ENCODE measurements at regions of chr19 and their contacts with region 1.

Region 1: GRCh38 chr19:1315470-1316231 is 30.0 kb downstream of the EFNA2 start:
- DNase-seq: peak; percentile 66
- ATAC-seq: peak; percentile 66
- H3K4me3 Mint-ChIP-seq: peak overlapping the region; percentile 20; the same call in 1 of the 2 replicates
- H3K27ac Mint-ChIP-seq: no peak overlapping the region
- H3K4me1 Mint-ChIP-seq: no peaks in the 10 kb centered on the region
- H3K27me3 Mint-ChIP-seq: peaks cover 22% of the 10 kb centered on the region
- CTCF ChIP-seq: peak; percentile 32; the same call in 1 of the 2 replicates

Region 2: GRCh38 chr19:1154731-1155351 is 160.8 kb before region 1 on chr19:
- CTCF ChIA-PET with region 1: no interaction called
- POLR2A ChIA-PET with region 1: no interaction called
- DNase-seq: no peak
- ATAC-seq: no peak
- H3K4me3 Mint-ChIP-seq: no peak overlapping the region
- H3K27ac Mint-ChIP-seq: no peak overlapping the region
- H3K4me1 Mint-ChIP-seq: no peaks in the 10 kb centered on the region
- H3K27me3 Mint-ChIP-seq: no peaks in the 10 kb centered on the region
- CTCF ChIP-seq: no peak

Region 3: DNA sequence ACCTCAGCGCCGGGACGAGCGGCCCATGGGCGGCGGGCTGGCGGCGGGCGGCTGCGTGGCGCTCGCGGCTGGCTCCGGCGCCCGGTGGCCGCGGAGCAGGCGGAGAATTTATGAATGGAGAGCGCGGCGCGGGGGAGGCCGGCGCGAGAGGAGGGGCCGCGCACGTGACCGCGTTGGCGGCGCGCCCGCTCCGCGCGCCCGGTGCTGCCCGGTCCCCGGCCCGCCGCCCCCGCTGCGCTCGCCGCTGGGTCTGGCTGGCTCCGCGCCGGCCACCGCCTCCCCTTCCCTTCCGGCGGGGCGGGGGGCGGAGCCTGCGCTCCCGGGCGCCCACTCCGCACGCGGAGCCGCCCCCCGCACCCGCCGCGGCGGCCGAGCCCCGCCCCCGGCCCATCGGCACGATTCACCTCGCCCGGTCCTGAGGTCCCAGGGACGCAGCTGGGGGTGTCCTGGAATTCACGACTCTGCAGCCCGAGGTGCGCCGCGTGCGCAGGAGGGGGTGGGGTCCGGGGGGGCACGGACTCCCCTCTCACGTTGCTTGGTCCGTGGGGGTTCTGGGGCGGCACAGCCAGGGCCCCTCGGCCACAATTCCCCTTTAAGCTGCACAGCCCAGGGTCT is 77.8 kb before region 1 on chr19 and contains the start of gene CBARP:
- CTCF ChIA-PET with region 1: no interaction called
- POLR2A ChIA-PET with region 1: no interaction called
- DNase-seq: peak; percentile 54
- ATAC-seq: peak; percentile 6
- H3K4me3 Mint-ChIP-seq: peak within 1 kb of the TSS; percentile 76
- H3K27ac Mint-ChIP-seq: peak within 1 kb of the TSS; percentile 87
- H3K4me1 Mint-ChIP-seq: peaks cover 17% of the 10 kb centered on the region
- H3K27me3 Mint-ChIP-seq: peaks cover 4% of the 10 kb centered on the region; the same call in 1 of the 2 replicates
- CTCF ChIP-seq: no peak
- total RNA-seq, gene CBARP: 21.9 to 23.6 TPM (median 23.4 TPM) in 3 replicates

Region 4: DNA sequence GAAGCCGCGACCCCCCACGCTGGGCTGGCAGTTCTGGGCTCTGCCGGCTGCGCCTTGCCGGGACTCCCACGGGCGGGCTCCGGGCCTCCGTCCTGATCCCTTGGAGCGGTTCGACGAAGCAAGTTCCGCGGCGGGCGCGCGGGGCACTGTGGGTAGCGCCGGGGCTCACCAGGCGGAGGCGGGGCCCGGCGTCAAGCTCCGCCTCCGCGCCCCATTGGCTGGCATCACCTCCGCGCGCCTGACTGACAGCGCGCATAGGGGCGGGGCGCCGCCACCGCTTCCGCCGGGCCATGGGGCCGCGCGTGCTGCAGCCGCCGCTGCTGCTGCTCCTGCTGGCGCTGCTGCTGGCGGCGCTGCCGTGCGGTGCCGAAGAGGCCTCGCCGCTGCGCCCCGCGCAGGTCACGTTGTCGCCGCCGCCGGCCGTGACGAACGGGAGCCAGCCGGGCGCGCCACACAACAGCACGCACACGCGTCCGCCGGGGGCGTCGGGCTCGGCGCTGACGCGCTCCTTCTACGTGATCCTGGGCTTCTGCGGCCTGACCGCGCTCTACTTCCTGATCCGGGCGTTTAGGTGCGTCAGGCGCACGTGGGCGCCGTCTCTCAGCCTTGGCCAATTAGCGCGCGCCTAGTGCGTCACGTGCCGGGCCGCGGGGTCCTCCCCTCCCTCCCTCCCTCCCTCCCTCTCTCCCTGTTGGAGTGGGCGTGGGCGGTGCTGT is 40.2 kb before region 1 on chr19 and contains the start of gene FAM174C:
- CTCF ChIA-PET with region 1: interaction called, 10 read pairs
- POLR2A ChIA-PET with region 1: no interaction called
- DNase-seq: peak; percentile 95
- ATAC-seq: peak; percentile 68
- H3K4me3 Mint-ChIP-seq: peak within 1 kb of the TSS; percentile 71
- H3K27ac Mint-ChIP-seq: peak within 1 kb of the TSS; percentile 95
- H3K4me1 Mint-ChIP-seq: peaks cover 34% of the 10 kb centered on the region
- H3K27me3 Mint-ChIP-seq: no peaks in the 10 kb centered on the region
- CTCF ChIP-seq: no peak
- total RNA-seq, gene FAM174C: 59.4 to 65.9 TPM (median 65.7 TPM) in 3 replicates

Region 5: DNA sequence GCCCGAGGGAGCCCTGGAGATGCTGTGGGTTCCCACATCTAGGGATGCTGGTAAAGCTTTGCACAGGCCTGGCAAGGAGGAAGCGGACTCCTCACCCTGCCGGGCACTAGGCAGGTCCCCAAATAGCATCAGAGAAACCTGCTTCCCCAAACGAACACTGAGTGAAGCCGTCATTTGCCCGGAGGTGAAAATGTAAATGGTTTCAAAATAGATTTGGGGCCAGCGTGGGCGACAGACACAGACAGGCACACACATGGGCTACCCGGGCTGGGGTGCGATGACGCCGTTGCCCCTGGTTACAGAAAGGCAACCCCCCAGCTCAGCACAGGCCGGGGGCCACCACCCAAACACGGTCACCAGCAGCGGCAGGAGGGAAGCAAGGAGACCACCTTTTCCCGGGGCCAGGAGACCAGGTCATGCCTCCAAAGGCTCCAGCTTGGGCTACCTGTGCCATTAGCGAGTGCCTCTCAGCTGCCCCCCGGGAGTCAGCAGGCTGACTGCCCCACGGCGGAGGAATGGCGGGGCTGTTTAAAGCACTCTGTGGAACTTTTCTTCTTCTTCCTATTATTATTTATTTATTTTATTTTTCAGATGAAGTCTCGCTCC is 20.5 kb after region 1 on chr19:
- CTCF ChIA-PET with region 1: interaction called, 12 read pairs
- POLR2A ChIA-PET with region 1: no interaction called
- DNase-seq: no peak
- ATAC-seq: no peak
- H3K4me3 Mint-ChIP-seq: no peak overlapping the region
- H3K27ac Mint-ChIP-seq: no peak overlapping the region; the same call in 1 of the 2 replicates
- H3K4me1 Mint-ChIP-seq: no peaks in the 10 kb centered on the region
- H3K27me3 Mint-ChIP-seq: no peaks in the 10 kb centered on the region
- CTCF ChIP-seq: no peak

Region 6: DNA sequence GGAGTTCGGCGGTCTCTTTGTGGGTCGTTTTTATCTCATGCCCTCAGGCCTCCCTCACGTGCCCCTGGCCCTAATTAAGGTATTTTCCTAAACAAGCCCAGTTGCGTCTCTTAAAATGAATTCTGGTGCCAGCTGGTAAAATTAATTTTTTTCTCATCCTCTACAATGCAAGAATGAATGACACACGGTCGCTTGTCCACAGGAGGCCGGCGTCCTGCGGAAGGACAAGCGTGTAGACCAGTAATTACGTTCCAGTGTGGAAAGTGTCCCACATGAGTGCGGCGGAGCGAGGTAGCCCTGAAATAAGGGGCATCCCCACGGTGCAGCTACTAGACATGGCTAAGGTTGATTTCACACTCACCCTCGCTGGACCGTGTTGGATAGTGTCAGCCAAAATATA is 33.6 kb after region 1 on chr19:
- CTCF ChIA-PET with region 1: interaction called, 10 read pairs
- POLR2A ChIA-PET with region 1: no interaction called
- DNase-seq: no peak
- ATAC-seq: no peak
- H3K4me3 Mint-ChIP-seq: no peak overlapping the region
- H3K27ac Mint-ChIP-seq: no peak overlapping the region
- H3K4me1 Mint-ChIP-seq: no peaks in the 10 kb centered on the region
- H3K27me3 Mint-ChIP-seq: no peaks in the 10 kb centered on the region
- CTCF ChIP-seq: no peak

Region 7: GRCh38 chr19:1373534-1374249 is 58.0 kb after region 1 on chr19:
- CTCF ChIA-PET with region 1: interaction called, 11 read pairs
- POLR2A ChIA-PET with region 1: no interaction called
- DNase-seq: no peak
- ATAC-seq: no peak
- H3K4me3 Mint-ChIP-seq: no peak overlapping the region
- H3K27ac Mint-ChIP-seq: peak overlapping the region; percentile 32; the same call in 1 of the 2 replicates
- H3K4me1 Mint-ChIP-seq: no peaks in the 10 kb centered on the region
- H3K27me3 Mint-ChIP-seq: no peaks in the 10 kb centered on the region
- CTCF ChIP-seq: no peak

Region 8: DNA sequence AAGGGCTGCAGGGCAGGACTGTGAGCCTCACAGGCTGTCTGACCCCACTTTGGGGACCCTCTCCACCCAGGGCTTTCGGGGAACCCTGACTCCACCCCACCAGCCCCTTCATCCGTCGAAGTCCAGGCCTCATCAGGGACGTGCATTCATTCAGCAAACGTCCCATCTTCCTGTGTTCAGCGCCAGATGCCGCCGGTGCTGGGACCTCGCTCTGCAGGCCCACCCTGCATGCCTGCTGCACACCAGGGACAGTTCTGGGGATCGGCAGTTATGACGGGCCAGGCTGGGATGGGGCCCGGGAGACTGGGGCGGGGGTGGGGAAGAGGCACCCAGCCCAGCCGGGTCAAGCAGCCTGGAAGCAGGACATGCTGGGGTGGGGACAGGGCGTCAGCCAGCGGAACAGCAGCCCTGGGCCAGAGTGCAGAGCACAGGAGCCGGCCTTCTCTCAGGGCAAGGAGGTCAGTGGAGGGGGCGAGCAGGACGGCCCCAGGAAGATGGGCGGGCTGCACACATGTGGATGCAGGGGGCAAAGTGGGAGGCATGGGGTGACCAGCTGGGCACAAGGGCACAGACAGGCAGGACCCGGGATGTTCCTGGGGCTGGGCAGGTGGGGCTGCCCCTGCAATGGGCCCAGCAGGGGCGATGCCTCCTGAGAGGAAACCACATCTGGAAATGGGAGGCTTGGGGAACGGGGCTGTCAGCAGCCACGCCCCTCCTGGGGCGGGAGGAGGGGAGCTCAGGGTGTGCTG is 80.5 kb after region 1 on chr19:
- CTCF ChIA-PET with region 1: interaction called, 12 read pairs
- POLR2A ChIA-PET with region 1: no interaction called
- DNase-seq: no peak
- ATAC-seq: 0 out of 2 replicates have a peak, but pooled peaks have one; percentile 5
- H3K4me3 Mint-ChIP-seq: no peak overlapping the region
- H3K27ac Mint-ChIP-seq: no peak overlapping the region
- H3K4me1 Mint-ChIP-seq: no peaks in the 10 kb centered on the region
- H3K27me3 Mint-ChIP-seq: no peaks in the 10 kb centered on the region; the same call in 1 of the 2 replicates
- CTCF ChIP-seq: no peak

Region 9: DNA sequence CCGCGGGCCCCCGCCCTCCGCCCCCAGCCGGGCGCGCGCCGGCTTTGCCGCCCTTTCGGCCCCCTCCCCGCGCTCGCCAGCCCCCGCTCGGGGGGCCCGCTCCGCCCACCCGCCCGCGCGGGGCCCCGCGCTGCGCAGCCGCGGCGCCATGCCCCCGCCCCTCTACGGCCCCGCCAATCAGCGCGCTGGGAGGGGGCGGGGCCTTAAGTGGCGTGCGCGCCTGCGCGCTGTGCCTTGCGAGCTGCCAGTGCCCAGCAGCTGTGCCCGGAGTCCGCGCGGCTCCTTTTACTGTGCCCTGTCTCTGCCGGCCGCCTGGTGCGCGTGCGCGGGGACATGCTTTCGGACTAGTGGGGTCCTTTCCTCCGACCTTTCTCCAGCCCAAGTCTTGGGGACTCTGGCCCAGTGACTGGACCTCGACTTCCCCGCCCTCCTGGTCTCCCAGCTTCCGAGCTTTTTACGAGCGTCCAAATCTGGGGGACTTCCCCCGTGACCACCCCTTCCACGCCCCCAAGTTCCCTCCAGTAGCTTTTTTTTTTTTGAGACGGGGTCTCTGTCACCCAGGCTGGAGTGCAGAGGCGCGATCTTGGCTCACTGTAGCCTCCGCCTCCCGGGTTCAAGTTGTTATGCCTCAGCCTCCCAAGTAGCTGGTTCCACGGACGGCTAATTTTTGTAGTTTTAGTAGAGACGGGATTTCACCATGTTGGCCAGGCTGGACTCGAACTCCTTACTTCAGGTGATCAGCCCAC is 277.3 kb after region 1 on chr19 and contains the start of gene MBD3:
- CTCF ChIA-PET with region 1: no interaction called
- POLR2A ChIA-PET with region 1: no interaction called
- DNase-seq: peak; percentile 90
- ATAC-seq: peak; percentile 88
- H3K4me3 Mint-ChIP-seq: peak within 1 kb of the TSS; percentile 85
- H3K27ac Mint-ChIP-seq: peak within 1 kb of the TSS; percentile 93
- H3K4me1 Mint-ChIP-seq: peaks cover 10% of the 10 kb centered on the region
- H3K27me3 Mint-ChIP-seq: no peaks in the 10 kb centered on the region
- CTCF ChIP-seq: no peak
- total RNA-seq, gene MBD3: 90.2 to 94.8 TPM (median 93.2 TPM) in 3 replicates

Measured in WTC11 (cell line).